ENCODE measurements at regions of chr10 and their contacts with region 1.

Region 1: GRCh38 chr10:9302120-9302746 is 1247.7 kb downstream of the GATA3 start:
- DNase-seq: no peak
- H3K4me3 Mint-ChIP-seq: no peak overlapping the region
- H3K27ac Mint-ChIP-seq: no peak overlapping the region
- H3K4me1 Mint-ChIP-seq: peaks cover 7% of the 10 kb centered on the region
- H3K27me3 Mint-ChIP-seq: peaks cover 5% of the 10 kb centered on the region

Region 2: GRCh38 chr10:7525314-7526016 is 1776.8 kb before region 1 on chr10:
- intact Hi-C with region 1: loop called (anchors 2 kb)
- DNase-seq: peak; percentile 47
- H3K4me3 Mint-ChIP-seq: no peak overlapping the region
- H3K27ac Mint-ChIP-seq: no peak overlapping the region
- H3K4me1 Mint-ChIP-seq: peaks cover 18% of the 10 kb centered on the region
- H3K27me3 Mint-ChIP-seq: peaks cover 12% of the 10 kb centered on the region

Region 3: DNA sequence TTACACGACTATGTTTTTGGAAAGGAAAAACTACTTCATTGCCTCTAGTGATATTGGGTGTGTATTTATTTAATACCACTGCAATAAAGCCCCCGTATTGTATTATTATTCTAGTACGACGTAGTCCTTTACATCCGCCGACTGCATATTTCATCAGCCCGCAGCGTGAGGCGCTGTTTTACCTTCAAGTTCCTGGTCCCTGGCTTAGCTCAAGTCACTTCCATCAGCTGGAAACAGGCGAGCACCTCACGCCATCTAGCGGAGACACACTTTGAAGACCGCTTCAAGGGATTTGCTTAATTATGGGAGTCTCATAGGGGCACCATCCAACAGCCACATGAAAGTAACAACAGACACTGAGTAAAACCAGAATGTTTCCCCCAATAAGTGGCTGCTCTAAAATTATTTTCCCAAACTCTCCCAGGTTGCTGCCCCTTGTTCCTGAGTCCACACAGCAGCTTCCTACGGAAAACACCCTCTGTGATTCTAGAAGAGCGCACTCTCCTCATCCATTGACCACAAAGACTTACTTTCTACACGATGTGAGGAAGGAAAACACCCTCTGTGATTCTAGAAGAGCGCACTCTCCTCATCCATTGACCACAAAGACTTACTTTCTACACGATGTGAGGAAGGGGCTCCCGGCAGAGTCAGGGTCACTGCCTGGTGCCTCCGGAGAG is 1614.9 kb before region 1 on chr10:
- intact Hi-C with region 1: loop called (anchors 2 kb)
- DNase-seq: peak; percentile 72
- H3K4me3 Mint-ChIP-seq: no peak overlapping the region
- H3K27ac Mint-ChIP-seq: no peak overlapping the region
- H3K4me1 Mint-ChIP-seq: peaks cover 10% of the 10 kb centered on the region
- H3K27me3 Mint-ChIP-seq: peaks cover 29% of the 10 kb centered on the region

Region 4: GRCh38 chr10:7787857-7788638 is 1514.2 kb before region 1 on chr10 and contains the starts of genes ATP5F1C and KIN:
- intact Hi-C with region 1: loop called (anchors 10 kb)
- DNase-seq: peak; percentile 97
- H3K4me3 Mint-ChIP-seq: no peak within 1 kb of the TSS
- H3K27ac Mint-ChIP-seq: no peak within 1 kb of the TSS
- H3K4me1 Mint-ChIP-seq: peaks cover 36% of the 10 kb centered on the region
- H3K27me3 Mint-ChIP-seq: no peaks in the 10 kb centered on the region
- total RNA-seq, gene ATP5F1C: 354 and 403 TPM in 2 replicates
- total RNA-seq, gene KIN: 9.8 and 12.0 TPM in 2 replicates

Region 5: GRCh38 chr10:7872041-7872442 is 1430.2 kb before region 1 on chr10:
- intact Hi-C with region 1: loop called (anchors 1 kb)
- DNase-seq: no peak
- H3K4me3 Mint-ChIP-seq: peak overlapping the region; percentile 89
- H3K27ac Mint-ChIP-seq: peak overlapping the region; percentile 64
- H3K4me1 Mint-ChIP-seq: peaks cover 13% of the 10 kb centered on the region
- H3K27me3 Mint-ChIP-seq: no peaks in the 10 kb centered on the region

Region 6: GRCh38 chr10:9209105-9209798 is 93.0 kb before region 1 on chr10:
- intact Hi-C with region 1: loop called (anchors 5 kb)
- DNase-seq: peak; percentile 60
- H3K4me3 Mint-ChIP-seq: no peak overlapping the region
- H3K27ac Mint-ChIP-seq: peak overlapping the region; percentile 61
- H3K4me1 Mint-ChIP-seq: peaks cover 16% of the 10 kb centered on the region
- H3K27me3 Mint-ChIP-seq: no peaks in the 10 kb centered on the region

Region 7: DNA sequence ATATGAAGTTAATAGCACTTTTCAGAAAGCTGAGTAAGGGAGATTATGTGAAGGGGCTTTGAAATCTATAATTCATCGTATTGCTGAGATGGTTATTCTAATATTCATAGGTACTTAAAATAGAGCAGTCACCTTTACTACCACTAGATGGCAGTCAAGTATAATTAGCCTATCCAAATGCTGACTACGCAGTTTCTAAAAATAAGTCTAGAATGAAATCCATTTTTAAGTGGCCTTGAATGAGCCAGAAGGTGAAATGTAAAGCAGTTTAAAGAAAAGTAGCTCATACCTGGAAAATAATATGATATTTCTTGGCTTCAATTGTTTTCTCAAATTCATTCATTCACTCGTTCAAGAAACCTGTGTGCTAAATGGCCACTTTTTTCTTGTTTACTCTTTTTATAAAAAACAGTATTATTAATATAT is 29.4 kb after region 1 on chr10:
- intact Hi-C with region 1: no loop called
- DNase-seq: no peak
- H3K4me3 Mint-ChIP-seq: no peak overlapping the region
- H3K27ac Mint-ChIP-seq: no peak overlapping the region
- H3K4me1 Mint-ChIP-seq: no peaks in the 10 kb centered on the region
- H3K27me3 Mint-ChIP-seq: peaks cover 20% of the 10 kb centered on the region

Region 8: DNA sequence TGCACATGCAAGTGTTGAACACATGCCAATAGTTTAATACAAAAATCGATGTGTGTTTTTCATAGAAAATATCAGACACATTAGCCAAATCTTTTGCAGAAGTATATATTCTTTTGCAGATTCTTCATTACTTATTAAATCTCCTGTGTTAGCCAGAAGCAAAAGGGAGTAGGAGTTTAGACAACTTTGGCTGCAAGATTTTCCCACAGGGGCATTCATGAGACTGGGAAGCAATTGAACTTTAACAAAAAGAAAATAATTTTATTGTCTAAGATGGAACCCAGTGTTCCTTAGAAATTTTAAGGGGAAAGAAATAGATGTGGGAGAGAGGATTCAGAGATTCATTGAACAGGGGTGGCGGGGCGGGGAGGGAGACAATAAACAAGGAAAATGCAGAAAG is 88.3 kb after region 1 on chr10:
- intact Hi-C with region 1: no loop called
- DNase-seq: no peak
- H3K4me3 Mint-ChIP-seq: no peak overlapping the region
- H3K27ac Mint-ChIP-seq: no peak overlapping the region
- H3K4me1 Mint-ChIP-seq: peaks cover 4% of the 10 kb centered on the region
- H3K27me3 Mint-ChIP-seq: peaks cover 4% of the 10 kb centered on the region